CD4-positive, alpha-beta T cell (primary cell): ENCODE measurements at regions of chr5 and their contacts with region 1.

Region 1: DNA sequence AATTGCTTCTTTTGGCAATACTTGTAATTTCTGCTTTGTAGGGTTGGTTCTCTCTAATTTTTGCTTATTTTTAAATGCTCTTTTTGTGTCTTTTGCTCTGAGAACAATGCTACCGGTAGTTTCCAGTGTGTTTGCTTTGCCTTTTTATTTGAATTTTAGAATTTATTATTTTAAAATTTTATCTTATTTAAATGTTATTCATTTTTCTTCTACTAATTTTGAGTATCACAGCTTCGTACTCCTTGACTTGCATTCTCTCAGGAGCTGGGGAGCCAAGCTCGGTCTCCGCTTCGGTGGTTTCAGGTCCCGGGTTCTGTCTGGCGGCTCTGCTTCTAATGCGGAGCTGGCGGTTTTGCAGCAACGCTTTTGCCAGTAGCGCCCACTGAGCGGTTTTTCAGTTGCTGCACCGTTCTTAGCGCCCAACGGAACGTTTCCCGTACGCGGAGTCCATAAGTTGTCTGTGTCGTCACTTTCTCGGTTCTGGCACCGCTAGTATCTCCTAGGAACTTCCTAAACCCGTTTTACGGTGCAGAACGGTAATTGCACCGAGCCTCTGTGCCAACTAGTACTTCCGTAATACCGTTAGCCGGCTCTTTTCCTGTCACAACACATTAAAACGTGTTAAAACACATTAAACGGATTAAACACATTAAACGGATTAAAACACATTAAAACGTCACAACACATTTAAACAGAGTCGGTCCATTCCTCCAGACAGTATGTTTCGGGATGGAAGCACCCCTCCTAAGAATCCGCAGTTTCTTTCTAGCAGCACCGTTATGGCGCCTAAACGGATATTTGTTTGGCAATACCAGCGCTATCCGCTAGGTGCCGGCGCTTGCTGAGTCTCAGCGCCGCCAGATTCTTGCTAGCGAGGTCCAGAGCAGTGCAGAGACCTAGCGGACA is 45.6 kb downstream of the ANXA2R start:
- DNase-seq: peak; percentile 81 to 94 (median 84)
- ATAC-seq: peak; percentile 59
- H3K4me3 ChIP-seq: peak overlapping the region; percentile 80
- H3K4me3 Mint-ChIP-seq: peak overlapping the region; percentile 100
- H3K27ac ChIP-seq: peak overlapping the region; percentile 93 to 98
- H3K27ac Mint-ChIP-seq: peak overlapping the region; percentile 99
- H3K4me1 ChIP-seq: peaks cover 46% of the 10 kb centered on the region
- H3K4me1 Mint-ChIP-seq: peaks cover 48% of the 10 kb centered on the region
- H3K27me3 ChIP-seq: no peaks in the 10 kb centered on the region
- H3K27me3 Mint-ChIP-seq: peaks cover 9% of the 10 kb centered on the region
- CTCF ChIP-seq: peak; percentile 85

Region 2: DNA sequence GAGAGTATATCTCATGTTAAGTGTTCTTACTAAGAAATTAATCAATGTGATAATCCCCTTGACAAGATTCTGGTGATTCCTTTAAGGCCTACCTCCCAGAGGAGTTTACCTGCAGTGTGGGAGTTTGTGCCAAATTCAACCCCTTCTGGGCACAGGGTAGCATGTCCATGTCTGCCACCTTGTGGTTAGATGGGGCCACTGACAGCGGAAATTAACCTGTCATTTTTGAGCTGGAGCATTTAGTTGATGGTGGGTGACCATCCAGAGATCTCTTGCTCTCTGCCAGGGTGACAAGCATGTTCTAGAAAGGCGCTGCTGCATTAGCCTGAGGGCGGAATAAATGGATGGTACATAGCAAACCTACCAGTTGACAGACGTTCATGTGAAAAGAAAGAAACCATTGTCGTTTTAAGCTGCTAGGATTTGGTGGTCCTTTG is 937.2 kb before region 1 on chr5:
- CTCF ChIA-PET with region 1: no interaction called
- POLR2A ChIA-PET with region 1: no interaction called
- intact Hi-C with region 1: no loop called
- DNase-seq: peak; percentile 27 to 74 (median 44)
- ATAC-seq: peak; percentile 84
- H3K4me3 ChIP-seq: no peak overlapping the region
- H3K4me3 Mint-ChIP-seq: no peak overlapping the region
- H3K27ac ChIP-seq: no peak overlapping the region
- H3K27ac Mint-ChIP-seq: no peak overlapping the region
- H3K4me1 ChIP-seq: no peaks in the 10 kb centered on the region
- H3K4me1 Mint-ChIP-seq: no peaks in the 10 kb centered on the region
- H3K27me3 ChIP-seq: no peaks in the 10 kb centered on the region
- H3K27me3 Mint-ChIP-seq: peaks cover 10% of the 10 kb centered on the region
- CTCF ChIP-seq: peak; percentile 78

Region 3: GRCh38 chr5:42908509-42909488 is 85.7 kb before region 1 on chr5:
- CTCF ChIA-PET with region 1: interaction called, 37 read pairs
- POLR2A ChIA-PET with region 1: interaction called, 174 read pairs
- intact Hi-C with region 1: loop called in 1 of 2 experiments (anchors 2 kb)
- DNase-seq: peak; percentile 80 to 96 (median 90)
- ATAC-seq: peak; percentile 94
- H3K4me3 ChIP-seq: peak overlapping the region; percentile 68
- H3K4me3 Mint-ChIP-seq: peak overlapping the region; percentile 93
- H3K27ac ChIP-seq: no peak overlapping the region
- H3K27ac Mint-ChIP-seq: peak overlapping the region; percentile 91
- H3K4me1 ChIP-seq: peaks cover 12% of the 10 kb centered on the region
- H3K4me1 Mint-ChIP-seq: peaks cover 24% of the 10 kb centered on the region
- H3K27me3 ChIP-seq: peaks cover 4 to 16% of the 10 kb centered on the region in 2 experiments
- H3K27me3 Mint-ChIP-seq: peaks cover 15% of the 10 kb centered on the region
- CTCF ChIP-seq: peak; percentile 89

Region 4: GRCh38 chr5:42970636-42971559 is 23.6 kb before region 1 on chr5:
- CTCF ChIA-PET with region 1: interaction called, 3 read pairs
- POLR2A ChIA-PET with region 1: interaction called, 11 read pairs
- intact Hi-C with region 1: no loop called
- DNase-seq: peak in 2 of 14 experiments; percentile 37 to 49
- ATAC-seq: no peak
- H3K4me3 ChIP-seq: no peak overlapping the region
- H3K4me3 Mint-ChIP-seq: no peak overlapping the region
- H3K27ac ChIP-seq: no peak overlapping the region
- H3K27ac Mint-ChIP-seq: no peak overlapping the region
- H3K4me1 ChIP-seq: peaks cover 4% of the 10 kb centered on the region
- H3K4me1 Mint-ChIP-seq: peaks cover 6% of the 10 kb centered on the region
- H3K27me3 ChIP-seq: no peaks in the 10 kb centered on the region
- H3K27me3 Mint-ChIP-seq: no peaks in the 10 kb centered on the region
- CTCF ChIP-seq: peak; percentile 27

Region 5: DNA sequence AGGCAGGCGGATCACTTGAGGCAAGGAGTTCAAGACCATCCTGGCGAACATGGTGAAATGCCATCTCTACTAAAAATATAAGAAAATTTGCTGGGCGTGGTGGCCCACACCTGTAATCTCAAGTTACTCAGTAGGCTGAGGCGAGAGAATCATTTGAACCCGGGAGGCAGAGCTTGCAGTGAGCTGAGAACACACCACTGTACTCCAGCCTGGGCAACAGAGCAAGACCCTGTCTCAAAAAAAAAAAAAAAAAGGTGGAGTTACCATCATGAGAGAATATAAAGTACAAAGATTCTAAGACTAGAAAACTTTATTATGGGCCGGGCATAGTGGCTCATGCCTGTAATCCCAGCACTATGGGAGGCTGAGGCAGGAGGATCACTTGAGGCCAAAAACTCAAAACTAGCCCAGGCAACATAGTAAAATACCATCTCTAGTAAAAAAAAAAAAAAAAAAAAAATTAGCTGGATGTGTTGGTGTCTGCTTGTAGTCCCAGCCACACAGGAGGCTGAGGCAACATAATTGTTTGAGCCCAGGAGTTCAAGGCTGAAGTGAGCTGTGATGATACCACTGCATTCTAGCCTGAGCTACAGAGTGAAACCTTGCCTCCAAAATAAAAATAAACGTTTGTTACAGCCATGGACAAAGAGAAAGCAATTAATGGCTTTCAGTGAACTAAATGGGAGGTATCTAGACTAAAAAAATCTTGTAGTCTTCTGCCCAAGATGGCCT is 32.7 kb after region 1 on chr5:
- CTCF ChIA-PET with region 1: no interaction called
- POLR2A ChIA-PET with region 1: interaction called, 1,251 read pairs
- intact Hi-C with region 1: no loop called
- DNase-seq: no peak
- ATAC-seq: no peak
- H3K4me3 ChIP-seq: no peak overlapping the region
- H3K4me3 Mint-ChIP-seq: no peak overlapping the region
- H3K27ac ChIP-seq: no peak overlapping the region
- H3K27ac Mint-ChIP-seq: no peak overlapping the region
- H3K4me1 ChIP-seq: peaks cover 3% of the 10 kb centered on the region
- H3K4me1 Mint-ChIP-seq: peaks cover 24% of the 10 kb centered on the region
- H3K27me3 ChIP-seq: no peaks in the 10 kb centered on the region
- H3K27me3 Mint-ChIP-seq: no peaks in the 10 kb centered on the region
- CTCF ChIP-seq: no peak

Region 6: DNA sequence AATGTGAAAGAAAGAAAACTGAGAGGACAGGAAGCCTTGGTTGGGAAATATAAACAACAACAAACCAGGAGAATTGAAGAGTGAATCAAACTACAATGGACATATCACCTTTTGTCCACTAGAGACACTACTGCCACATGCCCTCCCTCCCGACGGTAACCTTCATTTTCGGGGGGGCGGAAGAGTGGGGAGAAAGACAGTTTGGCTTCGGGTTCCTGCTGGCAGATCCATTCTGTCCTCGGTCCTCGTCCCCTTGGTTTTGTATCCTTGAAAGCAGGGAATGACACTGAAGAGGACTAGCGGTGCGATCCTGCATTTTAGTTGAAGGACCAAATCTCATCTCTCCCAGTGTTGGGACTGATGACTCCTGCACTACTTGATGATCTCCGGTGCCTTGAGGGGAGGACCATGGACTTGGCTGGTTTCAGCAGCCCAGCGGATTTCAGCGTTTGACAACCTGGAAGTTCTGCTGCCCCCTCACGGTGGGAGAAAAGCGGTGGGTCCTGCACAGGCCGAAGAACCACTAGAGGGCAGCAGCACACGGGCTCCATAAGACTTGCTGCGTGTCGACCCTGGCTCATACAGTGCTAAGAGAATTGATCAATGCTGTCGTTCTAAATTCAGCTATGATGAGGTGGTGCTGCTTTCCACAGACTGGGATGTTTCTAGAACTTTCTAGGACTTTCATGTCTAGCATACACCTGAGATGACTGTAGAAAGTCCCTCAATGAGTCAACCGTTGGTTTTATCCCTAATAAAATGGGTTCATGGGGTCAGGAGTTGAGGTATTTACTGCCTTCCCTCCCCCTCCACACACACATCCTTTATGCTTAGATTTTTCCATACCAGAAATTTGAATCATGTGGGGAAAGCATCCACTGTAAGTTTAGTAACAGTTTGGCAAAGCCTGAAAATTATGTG is 111.1 kb after region 1 on chr5:
- CTCF ChIA-PET with region 1: interaction called, 6 read pairs
- POLR2A ChIA-PET with region 1: interaction called, 8 read pairs
- intact Hi-C with region 1: loop called in 1 of 2 experiments (anchors 1 kb)
- DNase-seq: peak; percentile 85 to 97 (median 88)
- ATAC-seq: peak; percentile 90
- H3K4me3 ChIP-seq: peak overlapping the region; percentile 51
- H3K4me3 Mint-ChIP-seq: peak overlapping the region; percentile 91
- H3K27ac ChIP-seq: no peak overlapping the region
- H3K27ac Mint-ChIP-seq: peak overlapping the region; percentile 78
- H3K4me1 ChIP-seq: peaks cover 36% of the 10 kb centered on the region
- H3K4me1 Mint-ChIP-seq: peaks cover 41% of the 10 kb centered on the region
- H3K27me3 ChIP-seq: no peaks in the 10 kb centered on the region
- H3K27me3 Mint-ChIP-seq: no peaks in the 10 kb centered on the region
- CTCF ChIP-seq: peak; percentile 100

Region 7: DNA sequence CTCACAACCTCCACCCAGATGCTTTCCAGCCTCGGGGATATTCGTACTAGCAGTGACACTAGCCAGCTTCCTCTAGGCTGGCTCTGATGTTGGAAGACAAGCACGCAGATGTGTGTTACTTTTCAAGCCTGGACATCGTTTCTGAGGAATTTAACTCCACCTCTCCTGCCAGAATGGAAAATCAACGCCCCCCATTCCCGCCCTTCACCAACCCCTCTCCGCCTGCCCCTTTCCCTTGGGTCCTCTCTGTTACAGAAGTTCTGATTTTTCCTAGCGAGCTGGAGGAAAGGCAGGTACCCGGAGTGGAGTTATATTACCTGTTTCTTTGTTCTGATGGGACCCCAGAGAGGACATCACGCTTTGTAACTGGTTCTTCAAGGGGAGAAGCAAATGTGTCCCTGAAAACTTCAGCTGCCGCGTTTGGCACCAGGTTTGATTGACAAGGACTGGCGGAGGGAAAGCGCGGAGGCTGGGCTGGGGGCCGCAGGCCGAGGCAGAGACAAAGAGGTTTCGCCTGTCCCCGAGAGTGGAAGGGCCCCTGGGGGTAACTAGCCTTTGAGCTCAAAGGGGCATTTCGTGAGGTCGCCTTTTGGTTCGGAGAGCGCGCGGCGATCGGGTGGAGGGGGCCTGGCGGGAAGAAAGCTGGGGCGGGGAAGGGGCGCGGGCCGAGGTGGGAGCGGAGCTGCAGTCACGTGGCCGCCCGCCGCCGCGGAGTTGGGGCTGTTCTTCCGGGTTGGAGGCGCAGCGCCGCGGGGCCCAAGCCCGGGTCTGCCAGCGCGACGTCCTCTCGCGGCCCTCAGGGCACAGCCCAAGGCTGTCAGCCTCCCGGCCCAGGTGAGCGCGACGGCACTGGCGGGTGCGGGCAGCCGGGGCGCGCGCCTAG is 608.2 kb after region 1 on chr5 and contains the start of gene NNT:
- CTCF ChIA-PET with region 1: no interaction called
- POLR2A ChIA-PET with region 1: interaction called, 10 read pairs
- intact Hi-C with region 1: no loop called
- DNase-seq: peak; percentile 55 to 89 (median 72)
- ATAC-seq: peak; percentile 78
- H3K4me3 ChIP-seq: peak within 1 kb of the TSS; percentile 98
- H3K4me3 Mint-ChIP-seq: peak within 1 kb of the TSS; percentile 93
- H3K27ac ChIP-seq: peak within 1 kb of the TSS; percentile 58 to 82
- H3K27ac Mint-ChIP-seq: peak within 1 kb of the TSS; percentile 87
- H3K4me1 ChIP-seq: peaks cover 31% of the 10 kb centered on the region
- H3K4me1 Mint-ChIP-seq: peaks cover 58% of the 10 kb centered on the region
- H3K27me3 ChIP-seq: no peaks in the 10 kb centered on the region
- H3K27me3 Mint-ChIP-seq: no peaks in the 10 kb centered on the region
- CTCF ChIP-seq: no peak
- total RNA-seq, gene NNT: 22.3 to 23.5 TPM